ENCODE measurements at regions of chr17 and their contacts with region 1.

Region 1: GRCh38 chr17:21043286-21044232 is 748 bp upstream of the USP22 start:
- DNase-seq: no peak
- H3K4me3 ChIP-seq: peak overlapping the region; percentile 59 to 71
- H3K27ac ChIP-seq: peak overlapping the region; percentile 90 to 97
- H3K4me1 ChIP-seq: peaks cover 10% of the 10 kb centered on the region in 2 experiments; a peak in 3 of 4 replicates
- H3K27me3 ChIP-seq: no peaks in the 10 kb centered on the region
- CTCF ChIP-seq: peak; percentile 89
- EP300 ChIP-seq: no peak
- RAD21 ChIP-seq: peak; percentile 34; the same call in 1 of the 2 replicates

Region 2: GRCh38 chr17:21058098-21058893 is 14.7 kb after region 1 on chr17:
- CTCF ChIA-PET with region 1: interaction called, 15 read pairs
- POLR2A ChIA-PET with region 1: interaction called, 7 read pairs
- DNase-seq: no peak
- H3K4me3 ChIP-seq: no peak overlapping the region
- H3K27ac ChIP-seq: no peak overlapping the region
- H3K4me1 ChIP-seq: no peaks in the 10 kb centered on the region
- H3K27me3 ChIP-seq: 0 out of 2 replicates have a peak, but pooled peaks cover 4% of the 10 kb centered on the region
- CTCF ChIP-seq: peak; percentile 46; the same call in 1 of the 2 replicates
- EP300 ChIP-seq: no peak
- RAD21 ChIP-seq: no peak

Region 3: DNA sequence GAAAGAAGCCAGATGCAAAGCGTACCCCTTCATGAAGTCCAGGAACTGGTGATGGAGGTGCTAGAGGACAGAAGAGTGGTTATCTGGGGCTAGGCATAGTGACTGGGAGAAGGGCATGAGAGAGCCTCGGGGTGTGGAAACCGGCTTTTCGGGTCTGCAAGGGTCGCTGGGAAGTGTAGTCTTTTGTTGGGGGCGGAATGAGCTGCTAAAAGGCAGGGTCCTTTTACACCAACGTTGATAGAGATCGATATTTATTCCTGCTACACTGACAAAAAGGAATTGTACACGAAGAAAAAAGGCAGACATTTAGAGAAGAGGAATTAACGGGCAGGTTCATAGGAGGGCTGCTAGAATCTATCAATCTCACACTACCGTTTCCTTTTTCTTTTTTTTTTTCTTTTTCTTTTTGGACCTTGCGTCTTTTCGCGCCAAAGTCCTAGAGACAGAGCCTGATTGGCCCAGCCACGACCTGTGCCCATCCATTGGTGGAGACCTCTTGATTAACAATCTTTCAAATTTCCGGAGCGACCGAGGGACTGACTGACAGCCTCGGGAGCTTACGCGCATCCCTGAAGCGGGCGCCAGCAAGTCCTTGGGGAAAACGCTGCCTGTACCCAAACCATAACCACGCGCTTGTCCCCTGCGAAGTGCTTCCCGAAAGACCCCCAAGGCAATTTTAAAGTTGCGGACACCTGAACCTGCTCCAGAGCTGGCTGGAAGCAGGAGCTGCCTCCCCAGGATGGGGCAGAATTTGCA is 55.6 kb after region 1 on chr17:
- CTCF ChIA-PET with region 1: interaction called, 23 read pairs
- POLR2A ChIA-PET with region 1: interaction called, 35 read pairs
- DNase-seq: peak; percentile 90
- H3K4me3 ChIP-seq: peak overlapping the region; percentile 64 to 100
- H3K27ac ChIP-seq: peak overlapping the region in 1 of 2 experiments; percentile 62; a peak in 2 of 4 replicates
- H3K4me1 ChIP-seq: peaks cover 0 to 3% of the 10 kb centered on the region in 2 experiments; a peak in 1 of 4 replicates
- H3K27me3 ChIP-seq: no peaks in the 10 kb centered on the region
- CTCF ChIP-seq: no peak
- EP300 ChIP-seq: no peak
- RAD21 ChIP-seq: no peak

Measured in SK-N-SH (cell line).